Natural killer cell (primary cell): ENCODE measurements at regions of chr2 and their contacts with region 1.

Region 1: GRCh38 chr2:102520028-102520427 is 47.0 kb downstream of the SLC9A4 start:
- DNase-seq: peak in 1 of 2 donors; percentile 50
- ATAC-seq: peak; percentile 46 to 69 (median 62)
- H3K4me3 ChIP-seq: no peak overlapping the region
- H3K4me3 Mint-ChIP-seq: no peak overlapping the region
- H3K27ac ChIP-seq: no peak overlapping the region
- H3K27ac Mint-ChIP-seq: no peak overlapping the region
- H3K4me1 ChIP-seq: peaks cover 37% of the 10 kb centered on the region
- H3K4me1 Mint-ChIP-seq: peaks cover 54% of the 10 kb centered on the region in 2 donors
- H3K27me3 ChIP-seq: no peaks in the 10 kb centered on the region
- H3K27me3 Mint-ChIP-seq: no peaks in the 10 kb centered on the region
- CTCF ChIP-seq: peak; percentile 69

Region 2: DNA sequence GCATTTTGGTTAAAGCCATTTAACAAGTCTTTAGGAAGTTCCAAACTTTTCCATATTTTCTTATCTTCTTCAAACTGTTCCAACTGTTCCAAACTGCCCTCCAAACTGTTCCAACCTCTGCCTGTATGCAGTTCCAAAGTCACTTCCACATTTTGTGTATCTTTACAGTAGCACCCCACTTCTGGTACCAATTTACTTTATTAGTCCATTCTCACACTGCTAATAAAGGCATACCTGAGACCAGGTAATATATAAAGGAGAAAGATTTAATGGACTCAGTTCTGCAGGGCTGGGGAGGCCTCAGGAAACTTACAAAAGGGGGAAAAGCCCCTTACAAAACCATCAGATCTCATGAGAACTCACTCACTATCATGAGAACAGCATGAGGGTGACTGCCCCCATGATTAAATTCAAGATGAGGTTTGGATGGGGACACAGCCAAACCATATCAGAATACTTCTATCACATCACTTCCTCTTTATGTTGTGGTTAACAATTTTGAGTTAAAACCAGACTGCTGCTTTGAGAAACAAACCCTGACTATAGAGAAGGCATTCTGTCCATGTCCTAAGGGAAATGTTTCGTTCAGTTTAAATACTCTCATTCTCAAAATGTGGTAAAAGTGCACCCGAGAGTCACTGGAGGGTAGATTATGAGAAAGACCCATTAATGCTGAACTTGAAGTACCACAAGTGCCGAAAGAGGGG is 153.5 kb before region 1 on chr2:
- intact Hi-C with region 1: loop called (anchors 2 kb)
- DNase-seq: peak in 1 of 2 donors; percentile 60
- ATAC-seq: peak; percentile 25 to 53 (median 45)
- H3K4me3 ChIP-seq: peak overlapping the region; percentile 26
- H3K4me3 Mint-ChIP-seq: peak overlapping the region; percentile 88
- H3K27ac ChIP-seq: peak overlapping the region; percentile 80
- H3K27ac Mint-ChIP-seq: peak overlapping the region; percentile 90 to 95
- H3K4me1 ChIP-seq: peaks cover 35% of the 10 kb centered on the region
- H3K4me1 Mint-ChIP-seq: peaks cover 87% of the 10 kb centered on the region in 2 donors
- H3K27me3 ChIP-seq: no peaks in the 10 kb centered on the region
- H3K27me3 Mint-ChIP-seq: no peaks in the 10 kb centered on the region
- CTCF ChIP-seq: no peak

Region 3: DNA sequence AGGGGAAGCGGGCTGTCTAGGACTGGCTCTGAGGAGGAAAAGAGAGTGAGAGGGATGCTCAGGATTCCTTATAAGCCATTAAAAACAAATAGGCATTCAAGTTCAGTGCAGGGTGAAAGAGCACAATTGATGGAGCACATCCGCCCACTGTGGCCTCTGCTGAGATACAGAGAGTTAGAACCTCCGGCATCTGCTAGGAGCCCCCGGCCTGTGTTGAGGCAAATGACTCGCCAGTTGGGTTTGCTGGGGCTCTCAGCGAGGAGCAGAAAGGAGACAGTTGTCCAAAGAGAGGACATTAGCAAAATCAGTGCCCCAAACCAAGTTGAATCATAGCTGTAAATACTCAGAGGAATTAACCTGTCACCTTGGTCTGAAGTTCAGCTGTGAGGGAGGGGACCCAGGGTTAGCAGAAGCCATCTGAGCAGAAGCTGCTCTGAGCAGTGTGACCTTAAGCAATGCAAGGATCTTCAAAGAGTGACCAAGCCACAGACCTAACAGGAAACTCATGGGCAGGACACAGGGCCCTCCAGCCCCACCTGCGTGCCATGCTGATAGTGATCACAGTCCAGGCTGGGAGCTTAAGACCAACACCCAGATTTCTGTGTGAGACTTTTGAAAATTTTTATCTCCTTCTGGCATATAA is 120.4 kb before region 1 on chr2:
- intact Hi-C with region 1: no loop called
- DNase-seq: no peak
- ATAC-seq: peak; percentile 77 to 87 (median 81)
- H3K4me3 ChIP-seq: no peak overlapping the region
- H3K4me3 Mint-ChIP-seq: peak overlapping the region; percentile 35
- H3K27ac ChIP-seq: peak overlapping the region; percentile 4
- H3K27ac Mint-ChIP-seq: peak overlapping the region; percentile 69 to 78
- H3K4me1 ChIP-seq: peaks cover 22% of the 10 kb centered on the region
- H3K4me1 Mint-ChIP-seq: peaks cover 32 to 41% of the 10 kb centered on the region in 2 donors
- H3K27me3 ChIP-seq: no peaks in the 10 kb centered on the region
- H3K27me3 Mint-ChIP-seq: no peaks in the 10 kb centered on the region
- CTCF ChIP-seq: no peak

Region 4: GRCh38 chr2:102473020-102473419 is 47.0 kb before region 1 on chr2 and contains the start of gene SLC9A4:
- intact Hi-C with region 1: loop called (anchors 2 kb)
- DNase-seq: peak; percentile 58 to 72
- ATAC-seq: peak; percentile 67 to 90 (median 86)
- H3K4me3 ChIP-seq: no peak within 1 kb of the TSS
- H3K4me3 Mint-ChIP-seq: no peak within 1 kb of the TSS
- H3K27ac ChIP-seq: no peak within 1 kb of the TSS
- H3K27ac Mint-ChIP-seq: no peak within 1 kb of the TSS
- H3K4me1 ChIP-seq: no peaks in the 10 kb centered on the region
- H3K4me1 Mint-ChIP-seq: no peaks in the 10 kb centered on the region
- H3K27me3 ChIP-seq: peaks cover 4% of the 10 kb centered on the region
- H3K27me3 Mint-ChIP-seq: peaks cover 15 to 19% of the 10 kb centered on the region in 2 donors
- CTCF ChIP-seq: peak; percentile 96
- total RNA-seq, gene SLC9A4: 0.19 to 0.38 TPM in 2 of 3 donors, not detected in the other

Region 5: GRCh38 chr2:102540641-102541281 is 20.7 kb after region 1 on chr2:
- intact Hi-C with region 1: no loop called
- DNase-seq: no peak
- ATAC-seq: no peak
- H3K4me3 ChIP-seq: no peak overlapping the region
- H3K4me3 Mint-ChIP-seq: no peak overlapping the region
- H3K27ac ChIP-seq: no peak overlapping the region
- H3K27ac Mint-ChIP-seq: peak overlapping the region in 1 of 2 donors; percentile 6
- H3K4me1 ChIP-seq: no peaks in the 10 kb centered on the region
- H3K4me1 Mint-ChIP-seq: peaks cover 16 to 17% of the 10 kb centered on the region in 2 donors
- H3K27me3 ChIP-seq: no peaks in the 10 kb centered on the region
- H3K27me3 Mint-ChIP-seq: no peaks in the 10 kb centered on the region
- CTCF ChIP-seq: no peak

Region 6: DNA sequence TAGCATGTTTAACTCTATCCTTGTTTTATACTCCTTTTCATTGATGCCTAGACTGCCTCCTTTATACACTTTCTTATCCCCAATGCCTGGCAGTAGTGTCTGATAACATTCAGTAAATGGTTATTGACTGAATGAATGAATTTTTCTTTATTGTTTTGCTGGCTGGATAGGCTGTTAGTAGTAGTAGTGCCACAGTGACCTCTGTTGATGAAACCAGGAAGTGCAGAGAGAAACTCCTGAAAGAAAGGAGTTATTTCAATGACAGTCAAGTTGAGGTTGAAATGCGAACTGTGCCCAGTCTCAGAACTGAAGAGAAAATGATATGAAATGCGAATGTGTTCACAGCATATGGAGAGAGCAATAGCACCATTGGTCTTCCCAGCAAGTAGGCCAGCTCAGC is 72.6 kb after region 1 on chr2:
- intact Hi-C with region 1: loop called (anchors 1 kb)
- DNase-seq: peak in 1 of 2 donors; percentile 33
- ATAC-seq: peak in 2 of 3 donors; percentile 64 to 72
- H3K4me3 ChIP-seq: no peak overlapping the region
- H3K4me3 Mint-ChIP-seq: no peak overlapping the region
- H3K27ac ChIP-seq: no peak overlapping the region
- H3K27ac Mint-ChIP-seq: no peak overlapping the region
- H3K4me1 ChIP-seq: no peaks in the 10 kb centered on the region
- H3K4me1 Mint-ChIP-seq: peaks cover 28 to 34% of the 10 kb centered on the region in 2 donors
- H3K27me3 ChIP-seq: no peaks in the 10 kb centered on the region
- H3K27me3 Mint-ChIP-seq: peaks cover 0 to 6% of the 10 kb centered on the region in 2 donors
- CTCF ChIP-seq: peak; percentile 83

Region 7: GRCh38 chr2:102615622-102616436 is 95.8 kb after region 1 on chr2:
- intact Hi-C with region 1: loop called (anchors 1 kb)
- DNase-seq: peak; percentile 46 to 61
- ATAC-seq: peak; percentile 89 to 97 (median 93)
- H3K4me3 ChIP-seq: no peak overlapping the region
- H3K4me3 Mint-ChIP-seq: no peak overlapping the region
- H3K27ac ChIP-seq: no peak overlapping the region
- H3K27ac Mint-ChIP-seq: no peak overlapping the region
- H3K4me1 ChIP-seq: peaks cover 14% of the 10 kb centered on the region
- H3K4me1 Mint-ChIP-seq: peaks cover 8 to 15% of the 10 kb centered on the region in 2 donors
- H3K27me3 ChIP-seq: peaks cover 23% of the 10 kb centered on the region
- H3K27me3 Mint-ChIP-seq: peaks cover 37 to 49% of the 10 kb centered on the region in 2 donors
- CTCF ChIP-seq: peak; percentile 94

Region 8: GRCh38 chr2:102950371-102950946 is 430.4 kb after region 1 on chr2:
- intact Hi-C with region 1: no loop called
- DNase-seq: no peak
- ATAC-seq: no peak
- H3K4me3 ChIP-seq: no peak overlapping the region
- H3K4me3 Mint-ChIP-seq: no peak overlapping the region
- H3K27ac ChIP-seq: no peak overlapping the region
- H3K27ac Mint-ChIP-seq: no peak overlapping the region
- H3K4me1 ChIP-seq: no peaks in the 10 kb centered on the region
- H3K4me1 Mint-ChIP-seq: no peaks in the 10 kb centered on the region
- H3K27me3 ChIP-seq: no peaks in the 10 kb centered on the region
- H3K27me3 Mint-ChIP-seq: peaks cover 0 to 3% of the 10 kb centered on the region in 2 donors
- CTCF ChIP-seq: no peak

Region 9: DNA sequence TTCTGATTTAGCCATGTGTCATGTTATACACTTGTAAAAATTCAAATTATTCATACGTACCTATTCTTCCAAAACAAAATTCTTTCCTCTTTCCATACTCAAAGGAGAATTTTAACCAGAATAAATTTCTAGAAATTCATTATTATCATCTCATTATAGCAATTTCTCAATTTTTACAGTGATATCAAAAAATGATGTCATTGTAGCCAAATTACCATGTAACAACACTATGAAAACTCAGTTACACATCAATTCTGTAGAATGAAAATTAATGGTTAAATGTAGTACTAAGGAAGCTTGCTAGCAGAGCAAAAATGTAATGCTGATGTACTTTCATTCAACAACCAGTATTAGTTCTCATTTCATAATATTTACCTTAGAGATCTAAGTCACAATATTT is 1320.2 kb after region 1 on chr2:
- intact Hi-C with region 1: no loop called
- DNase-seq: no peak
- ATAC-seq: no peak
- H3K4me3 ChIP-seq: no peak overlapping the region
- H3K4me3 Mint-ChIP-seq: no peak overlapping the region
- H3K27ac ChIP-seq: no peak overlapping the region
- H3K27ac Mint-ChIP-seq: no peak overlapping the region
- H3K4me1 ChIP-seq: no peaks in the 10 kb centered on the region
- H3K4me1 Mint-ChIP-seq: no peaks in the 10 kb centered on the region
- H3K27me3 ChIP-seq: no peaks in the 10 kb centered on the region
- H3K27me3 Mint-ChIP-seq: no peaks in the 10 kb centered on the region
- CTCF ChIP-seq: no peak